Esophagus muscularis mucosa (tissue), 4 donors: ENCODE measurements at regions of chr12 and their contacts with region 1.

Region 1: GRCh38 chr12:123436017-123436964 is at the start of gene RILPL2:
- DNase-seq: peak; percentile 96
- H3K4me3 ChIP-seq: peak within 1 kb of the TSS; percentile 66 to 94 (median 78)
- H3K27ac ChIP-seq: peak within 1 kb of the TSS; percentile 73 to 83 (median 78)
- H3K4me1 ChIP-seq: peaks cover 22 to 51% (median 49%) of the 10 kb centered on the region in 4 donors
- H3K27me3 ChIP-seq: no peaks in the 10 kb centered on the region
- CTCF ChIP-seq: peak in 1 of 3 experiments; percentile 13
- EP300 ChIP-seq: no peak
- POLR2A ChIP-seq: peak; percentile 35
- total RNA-seq, gene RILPL2: 5.4 to 7.6 (median 5.8) TPM

Region 2: GRCh38 chr12:123533672-123534643 is 97.7 kb after region 1 on chr12 and contains the start of gene RILPL1:
- intact Hi-C with region 1: loop called (anchors 10 kb)
- DNase-seq: no peak
- H3K4me3 ChIP-seq: peak within 1 kb of the TSS; percentile 81 to 94 (median 90)
- H3K27ac ChIP-seq: peak within 1 kb of the TSS; percentile 89 to 95 (median 92)
- H3K4me1 ChIP-seq: peaks cover 36 to 42% (median 40%) of the 10 kb centered on the region in 4 donors
- H3K27me3 ChIP-seq: peaks cover 0 to 3% (median 0%) of the 10 kb centered on the region in 4 donors
- CTCF ChIP-seq: peak; percentile 17 to 47 (median 25)
- EP300 ChIP-seq: no peak
- POLR2A ChIP-seq: no peak
- total RNA-seq, gene RILPL1: 19.9 to 54.4 (median 38.4) TPM